ENCODE measurements at regions of chr5 and their contacts with region 1.

Region 1: DNA sequence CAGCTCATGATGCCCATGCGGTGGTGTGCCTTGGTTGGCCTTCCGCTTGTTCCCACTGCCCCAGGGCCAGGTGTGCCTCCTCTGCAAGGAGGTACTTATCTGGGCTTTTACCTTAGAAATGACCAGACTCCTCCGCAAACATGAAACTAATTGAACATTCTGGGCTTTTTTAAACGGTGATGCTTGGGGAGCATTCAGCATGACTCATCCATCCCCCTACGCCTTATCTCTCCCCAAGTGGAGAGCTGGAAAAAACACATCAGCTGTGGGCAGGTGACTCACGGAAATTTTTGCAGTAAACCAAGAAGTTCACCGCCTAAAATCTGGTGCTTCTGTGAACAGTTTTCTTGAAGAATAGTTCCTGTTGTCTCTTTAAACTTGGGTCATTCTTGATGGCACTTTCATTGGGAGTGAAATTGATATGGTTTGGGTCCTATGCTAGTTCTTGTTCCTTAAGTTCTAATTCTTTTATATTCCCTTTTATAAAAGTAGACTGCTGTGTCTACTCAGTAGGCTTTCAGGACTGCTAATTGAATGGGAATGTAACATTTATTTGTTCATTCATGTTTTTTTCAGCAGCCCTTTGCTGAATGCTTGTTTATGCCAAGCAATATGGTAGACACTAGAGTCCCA is 39.6 kb downstream of the SFXN1 start:
- DNase-seq: peak in 2 of 5 donors; percentile 29 to 90
- H3K4me3 ChIP-seq: peak overlapping the region in 1 of 2 donors; percentile 11
- H3K4me3 Mint-ChIP-seq: peak overlapping the region; percentile 43 to 82 (median 54)
- H3K27ac ChIP-seq: peak overlapping the region; percentile 55
- H3K27ac Mint-ChIP-seq: peak overlapping the region; percentile 69 to 95 (median 90)
- H3K4me1 ChIP-seq: peaks cover 74% of the 10 kb centered on the region
- H3K4me1 Mint-ChIP-seq: peaks cover 57 to 87% (median 70%) of the 10 kb centered on the region in 4 donors
- H3K27me3 ChIP-seq: no peaks in the 10 kb centered on the region
- H3K27me3 Mint-ChIP-seq: no peaks in the 10 kb centered on the region

Region 2: GRCh38 chr5:175478384-175479124 is 39.4 kb before region 1 on chr5 and contains the start of gene SFXN1:
- CTCF ChIA-PET with region 1: interaction called, 6 read pairs
- POLR2A ChIA-PET with region 1: interaction called, 69 read pairs
- intact Hi-C with region 1: loop called (anchors 1 kb)
- DNase-seq: peak; percentile 69 to 80 (median 74)
- H3K4me3 ChIP-seq: peak within 1 kb of the TSS; percentile 65 to 84
- H3K4me3 Mint-ChIP-seq: peak within 1 kb of the TSS; percentile 92 to 98 (median 96)
- H3K27ac ChIP-seq: peak within 1 kb of the TSS; percentile 60
- H3K27ac Mint-ChIP-seq: peak within 1 kb of the TSS; percentile 89 to 98 (median 93)
- H3K4me1 ChIP-seq: peaks cover 47% of the 10 kb centered on the region
- H3K4me1 Mint-ChIP-seq: peaks cover 42 to 67% (median 52%) of the 10 kb centered on the region in 4 donors
- H3K27me3 ChIP-seq: no peaks in the 10 kb centered on the region
- H3K27me3 Mint-ChIP-seq: no peaks in the 10 kb centered on the region
- total RNA-seq, gene SFXN1: 99.2 to 111 TPM

Region 3: GRCh38 chr5:175501759-175502339 is 16.1 kb before region 1 on chr5:
- CTCF ChIA-PET with region 1: interaction called, 3 read pairs
- POLR2A ChIA-PET with region 1: interaction called, 4 read pairs
- intact Hi-C with region 1: loop called (anchors 2 kb)
- DNase-seq: no peak
- H3K4me3 ChIP-seq: no peak overlapping the region
- H3K4me3 Mint-ChIP-seq: no peak overlapping the region
- H3K27ac ChIP-seq: no peak overlapping the region
- H3K27ac Mint-ChIP-seq: peak overlapping the region in 4 of 7 donors; percentile 1 to 86 (median 54)
- H3K4me1 ChIP-seq: peaks cover 4% of the 10 kb centered on the region
- H3K4me1 Mint-ChIP-seq: peaks cover 12 to 56% (median 25%) of the 10 kb centered on the region in 4 donors
- H3K27me3 ChIP-seq: no peaks in the 10 kb centered on the region
- H3K27me3 Mint-ChIP-seq: no peaks in the 10 kb centered on the region

Region 4: DNA sequence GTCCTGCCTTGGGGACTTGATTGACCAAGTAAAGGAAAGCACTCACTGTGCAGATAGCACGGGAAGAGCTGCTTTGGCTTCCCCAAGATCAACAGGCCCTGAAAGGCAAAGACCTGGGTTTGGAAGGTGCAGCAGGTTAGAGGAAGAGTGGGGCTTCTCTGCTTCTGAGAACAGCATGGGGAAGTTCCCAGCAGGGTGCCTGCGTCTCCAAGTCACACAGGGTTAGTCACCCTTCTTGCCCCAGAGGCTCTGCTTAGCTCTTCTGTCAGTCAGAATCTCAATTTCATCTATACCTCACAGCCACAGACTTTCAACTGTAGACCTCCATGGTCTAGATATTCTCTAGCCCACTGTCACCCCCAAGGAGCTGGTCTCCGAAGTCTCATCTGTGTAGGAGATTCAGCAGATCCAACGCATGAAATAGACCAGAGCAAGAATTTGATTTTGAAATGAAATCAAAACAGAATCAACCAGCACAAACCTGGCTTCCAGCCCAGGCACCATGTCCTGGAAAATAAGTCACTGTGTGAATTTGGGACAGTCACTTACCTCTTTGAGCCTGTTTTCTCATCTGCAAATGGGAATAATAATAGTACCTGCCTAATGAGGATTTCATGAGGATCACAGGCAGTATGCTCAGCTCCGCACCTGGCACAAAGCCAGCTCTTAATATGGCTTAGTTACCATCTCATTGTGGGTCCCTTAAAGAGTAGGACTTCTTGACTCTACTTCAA is 24.5 kb after region 1 on chr5:
- CTCF ChIA-PET with region 1: no interaction called
- POLR2A ChIA-PET with region 1: no interaction called
- intact Hi-C with region 1: no loop called
- DNase-seq: no peak
- H3K4me3 ChIP-seq: no peak overlapping the region
- H3K4me3 Mint-ChIP-seq: no peak overlapping the region
- H3K27ac ChIP-seq: no peak overlapping the region
- H3K27ac Mint-ChIP-seq: peak overlapping the region in 1 of 7 donors; percentile 37
- H3K4me1 ChIP-seq: no peaks in the 10 kb centered on the region
- H3K4me1 Mint-ChIP-seq: no peaks in the 10 kb centered on the region
- H3K27me3 ChIP-seq: no peaks in the 10 kb centered on the region
- H3K27me3 Mint-ChIP-seq: peaks cover 7 to 8% of the 10 kb centered on the region in 2 donors